WTC11 (cell line): ENCODE measurements at regions of chr10 and their contacts with region 1.

Region 1: DNA sequence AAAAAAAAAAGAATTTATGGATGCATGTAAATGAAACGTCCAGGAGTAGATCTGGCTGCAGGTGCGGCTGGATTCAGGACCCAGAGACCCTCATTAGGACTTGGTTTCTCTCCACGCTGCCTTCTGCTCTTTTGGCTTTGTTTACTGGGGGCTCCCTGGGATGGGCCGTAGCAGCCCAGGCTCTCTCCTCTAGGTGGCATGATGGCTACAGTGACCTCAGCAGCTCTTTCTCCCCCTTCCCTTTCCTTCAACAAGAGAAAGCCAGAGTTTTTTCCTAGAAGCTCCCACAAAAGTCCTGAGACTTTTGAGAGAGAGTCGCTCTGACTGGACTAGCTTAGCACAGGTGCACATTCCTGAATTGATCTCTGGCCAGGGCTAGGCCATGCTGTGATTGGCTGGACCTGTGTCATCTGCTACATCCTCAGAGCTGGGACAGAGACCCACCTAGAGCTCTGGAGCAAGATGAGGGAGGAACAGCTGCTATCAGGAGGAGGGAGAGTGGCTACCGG is 67.8 kb upstream of the PDCD4 start:
- DNase-seq: peak; percentile 48
- ATAC-seq: peak; percentile 97
- H3K4me3 Mint-ChIP-seq: no peak overlapping the region
- H3K27ac Mint-ChIP-seq: peak overlapping the region; percentile 78; the same call in 1 of the 2 replicates
- H3K4me1 Mint-ChIP-seq: peaks cover 3% of the 10 kb centered on the region
- H3K27me3 Mint-ChIP-seq: no peaks in the 10 kb centered on the region; the same call in 1 of the 2 replicates
- CTCF ChIP-seq: no peak

Region 2: DNA sequence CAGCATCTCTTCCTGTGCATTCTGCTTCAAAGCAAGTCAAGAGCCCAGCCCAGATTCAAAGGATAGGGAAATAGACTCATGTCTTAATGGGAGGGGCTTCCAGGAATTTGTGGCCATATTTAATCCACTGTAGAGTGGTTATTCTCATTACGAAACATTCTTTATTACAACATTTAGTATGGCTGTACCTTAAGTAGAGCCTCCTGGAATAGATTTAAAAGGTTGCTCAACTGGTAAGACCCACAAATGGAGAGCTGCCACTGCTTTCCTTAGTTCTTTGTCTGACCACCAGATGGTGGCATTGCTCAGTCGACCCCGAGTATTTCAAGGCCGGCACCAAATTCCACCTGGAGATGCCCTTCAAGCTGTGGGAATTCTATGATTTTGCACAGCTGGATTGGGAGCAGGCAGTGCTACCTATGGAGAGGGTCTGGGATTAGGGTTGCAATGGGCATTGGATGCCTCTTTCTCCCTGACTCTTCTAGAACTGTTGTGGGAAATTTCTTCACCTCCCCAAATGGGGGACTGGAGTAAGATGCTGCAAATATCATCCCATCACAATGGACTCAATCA is 57.5 kb before region 1 on chr10:
- CTCF ChIA-PET with region 1: interaction called, 12 read pairs
- POLR2A ChIA-PET with region 1: no interaction called
- DNase-seq: peak; percentile 67
- ATAC-seq: peak; percentile 90
- H3K4me3 Mint-ChIP-seq: no peak overlapping the region
- H3K27ac Mint-ChIP-seq: no peak overlapping the region
- H3K4me1 Mint-ChIP-seq: peaks cover 6% of the 10 kb centered on the region
- H3K27me3 Mint-ChIP-seq: no peaks in the 10 kb centered on the region
- CTCF ChIP-seq: peak; percentile 59

Region 3: GRCh38 chr10:110834629-110835301 is 30.9 kb after region 1 on chr10:
- CTCF ChIA-PET with region 1: interaction called, 12 read pairs
- POLR2A ChIA-PET with region 1: no interaction called
- DNase-seq: no peak
- ATAC-seq: peak; percentile 85
- H3K4me3 Mint-ChIP-seq: no peak overlapping the region
- H3K27ac Mint-ChIP-seq: 0 out of 2 replicates have a peak overlapping the region, but pooled peaks have one; percentile 10
- H3K4me1 Mint-ChIP-seq: peaks cover 28% of the 10 kb centered on the region
- H3K27me3 Mint-ChIP-seq: no peaks in the 10 kb centered on the region
- CTCF ChIP-seq: no peak

Region 4: GRCh38 chr10:110893559-110894179 is 89.8 kb after region 1 on chr10:
- CTCF ChIA-PET with region 1: interaction called, 12 read pairs
- POLR2A ChIA-PET with region 1: no interaction called
- DNase-seq: no peak
- ATAC-seq: peak; percentile 60
- H3K4me3 Mint-ChIP-seq: no peak overlapping the region
- H3K27ac Mint-ChIP-seq: no peak overlapping the region
- H3K4me1 Mint-ChIP-seq: no peaks in the 10 kb centered on the region
- H3K27me3 Mint-ChIP-seq: no peaks in the 10 kb centered on the region
- CTCF ChIP-seq: no peak

Region 5: GRCh38 chr10:110918643-110919363 is 114.9 kb after region 1 on chr10 and contains the start of gene BBIP1:
- CTCF ChIA-PET with region 1: interaction called, 12 read pairs
- POLR2A ChIA-PET with region 1: interaction called, 9 read pairs
- DNase-seq: no peak
- ATAC-seq: peak; percentile 96
- H3K4me3 Mint-ChIP-seq: peak within 1 kb of the TSS; percentile 97
- H3K27ac Mint-ChIP-seq: peak within 1 kb of the TSS; percentile 98
- H3K4me1 Mint-ChIP-seq: peaks cover 32% of the 10 kb centered on the region
- H3K27me3 Mint-ChIP-seq: no peaks in the 10 kb centered on the region
- CTCF ChIP-seq: no peak
- total RNA-seq, gene BBIP1: 19.0 to 26.7 TPM (median 23.3 TPM) in 3 replicates